Ascending aorta (tissue), 2 donors: ENCODE measurements at regions of chr16 and their contacts with region 1.

Region 1: DNA sequence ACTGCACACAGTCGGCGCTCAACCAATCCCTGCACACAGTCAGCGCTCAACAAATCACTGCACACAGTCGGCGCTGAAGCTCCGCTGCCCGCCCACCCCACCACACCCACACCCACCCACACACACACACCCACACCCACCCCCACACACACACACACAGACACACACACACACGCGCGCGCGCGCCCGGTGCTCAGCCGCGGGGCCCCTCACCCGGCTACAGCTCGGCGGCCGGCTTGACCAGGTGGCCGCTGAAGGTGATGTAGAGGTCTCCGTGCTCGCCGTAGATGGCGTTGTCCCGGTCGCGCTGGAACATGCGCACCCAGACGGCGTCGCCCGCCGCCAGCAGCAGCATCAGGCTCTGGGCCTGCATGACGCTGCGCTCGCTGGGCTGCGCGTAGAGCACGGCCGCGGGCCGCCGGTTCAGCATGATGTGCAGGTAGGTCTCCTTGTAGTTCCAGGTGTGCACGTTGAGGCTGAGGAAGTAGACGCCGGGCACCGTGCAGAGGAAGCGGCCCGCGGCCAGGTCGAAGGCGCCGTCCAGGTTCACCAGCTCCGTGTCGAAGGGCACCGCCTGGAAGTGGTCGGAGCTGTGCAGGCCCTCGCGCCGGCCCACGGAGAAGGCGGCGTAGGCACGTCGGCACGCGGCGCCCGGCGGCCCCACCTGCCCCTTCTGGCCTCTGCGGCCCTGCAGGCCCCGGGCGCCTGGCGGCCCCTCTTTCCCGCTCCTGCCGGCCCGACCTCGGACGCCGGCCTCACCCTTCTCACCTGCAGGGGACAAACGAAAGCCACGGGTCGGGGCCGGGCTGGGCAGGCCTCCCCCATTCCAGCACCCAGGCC is 2.5 kb downstream of the C1QTNF8 start:
- DNase-seq: no peak
- H3K4me3 ChIP-seq: no peak overlapping the region
- H3K27ac ChIP-seq: peak overlapping the region; percentile 90 to 95
- H3K4me1 ChIP-seq: peaks cover 40 to 59% of the 10 kb centered on the region in 2 donors
- H3K27me3 ChIP-seq: no peaks in the 10 kb centered on the region
- CTCF ChIP-seq: no peak

Region 2: GRCh38 chr16:714558-715476 is 378.7 kb before region 1 on chr16 and contains the start of gene METRN:
- intact Hi-C with region 1: loop called (anchors 10 kb)
- DNase-seq: peak; percentile 39 to 95
- H3K4me3 ChIP-seq: peak within 1 kb of the TSS; percentile 76 to 93
- H3K27ac ChIP-seq: no peak within 1 kb of the TSS
- H3K4me1 ChIP-seq: peaks cover 11 to 20% of the 10 kb centered on the region in 2 donors
- H3K27me3 ChIP-seq: peaks cover 6% of the 10 kb centered on the region
- CTCF ChIP-seq: no peak
- total RNA-seq, gene METRN: 118 TPM

Region 3: GRCh38 chr16:977081-977701 is 116.3 kb before region 1 on chr16:
- intact Hi-C with region 1: loop called (anchors 2 kb)
- DNase-seq: peak; percentile 63 to 87
- H3K4me3 ChIP-seq: peak overlapping the region in 1 of 2 donors; percentile 27
- H3K27ac ChIP-seq: peak overlapping the region; percentile 84 to 88
- H3K4me1 ChIP-seq: peaks cover 25 to 30% of the 10 kb centered on the region in 2 donors
- H3K27me3 ChIP-seq: peaks cover 6% of the 10 kb centered on the region
- CTCF ChIP-seq: no peak

Region 4: DNA sequence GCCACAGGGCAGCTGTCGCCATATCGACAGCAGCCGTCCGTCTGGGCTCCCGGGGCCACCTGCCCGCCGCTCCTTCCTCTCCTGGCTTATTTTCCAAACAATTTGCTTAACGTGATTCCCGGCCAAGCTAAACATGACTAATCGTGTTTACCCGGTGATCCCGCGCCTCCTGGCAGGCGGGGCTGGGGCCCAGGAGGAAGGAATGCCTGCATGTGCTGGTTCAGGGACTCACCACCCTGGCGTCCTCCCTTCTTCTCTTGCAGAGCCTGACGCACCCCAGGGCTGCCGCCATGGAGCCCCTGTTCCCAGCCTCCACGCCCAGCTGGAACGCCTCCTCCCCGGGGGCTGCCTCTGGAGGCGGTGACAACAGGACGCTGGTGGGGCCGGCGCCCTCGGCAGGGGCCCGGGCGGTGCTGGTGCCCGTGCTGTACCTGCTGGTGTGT is 14.9 kb before region 1 on chr16:
- intact Hi-C with region 1: loop called (anchors 1 kb)
- DNase-seq: peak; percentile 68 to 93
- H3K4me3 ChIP-seq: peak overlapping the region; percentile 10 to 52
- H3K27ac ChIP-seq: peak overlapping the region; percentile 19 to 53
- H3K4me1 ChIP-seq: peaks cover 43 to 59% of the 10 kb centered on the region in 2 donors
- H3K27me3 ChIP-seq: no peaks in the 10 kb centered on the region
- CTCF ChIP-seq: no peak

Region 5: GRCh38 chr16:1182316-1182671 is 88.8 kb after region 1 on chr16:
- intact Hi-C with region 1: loop called (anchors 1 kb)
- DNase-seq: peak; percentile 70 to 92
- H3K4me3 ChIP-seq: peak overlapping the region; percentile 6 to 35
- H3K27ac ChIP-seq: peak overlapping the region; percentile 83 to 91
- H3K4me1 ChIP-seq: peaks cover 19 to 32% of the 10 kb centered on the region in 2 donors
- H3K27me3 ChIP-seq: no peaks in the 10 kb centered on the region
- CTCF ChIP-seq: no peak